ENCODE measurements at regions of chr20 and their contacts with region 1.

Region 1: DNA sequence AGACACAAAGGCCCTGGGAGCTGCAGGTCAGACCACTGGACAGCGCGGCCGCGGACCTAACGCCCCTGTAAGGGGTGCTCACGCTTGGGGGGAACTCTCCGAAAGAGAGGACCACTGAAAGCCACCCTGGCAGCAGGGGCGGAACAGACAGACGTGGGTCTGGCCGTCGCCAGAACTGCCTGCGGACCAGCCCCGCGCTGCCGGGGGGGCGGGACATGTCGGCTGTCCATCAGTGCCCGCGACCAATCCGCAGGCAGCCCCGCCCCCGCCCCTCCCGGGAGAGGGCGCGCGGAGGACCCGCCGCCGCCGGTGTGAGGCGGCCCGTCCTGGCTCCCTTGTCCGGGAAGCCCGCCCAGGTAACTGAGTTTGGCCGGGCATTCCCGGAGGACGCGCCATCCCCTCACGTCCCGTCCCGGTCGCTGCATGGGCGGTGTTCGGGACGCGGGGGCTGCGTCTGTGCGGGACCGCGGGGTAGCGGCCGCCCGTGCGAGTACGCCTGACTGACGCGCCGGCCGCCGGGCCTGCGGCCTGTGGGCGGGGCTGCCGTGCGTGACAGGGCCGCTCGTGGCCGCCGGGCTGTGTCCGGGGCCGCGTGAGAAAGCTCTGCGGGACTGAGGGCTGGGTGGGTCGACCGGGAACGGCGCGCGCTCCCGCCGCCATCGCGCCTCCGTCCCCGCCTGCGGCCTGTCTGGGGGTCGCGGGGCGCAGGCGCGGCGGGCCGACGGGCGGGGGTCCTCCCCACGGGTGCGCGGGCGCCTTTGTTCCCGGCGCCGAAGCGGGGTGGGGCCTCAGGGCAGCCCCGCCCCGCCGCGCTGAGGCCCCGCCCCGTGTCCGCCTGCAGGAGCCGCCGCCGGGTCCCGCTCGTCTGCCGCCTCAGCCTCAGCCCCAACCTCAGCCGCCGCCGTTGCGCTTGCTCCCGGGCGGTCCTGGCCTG is at the start of gene PLCG1:
- DNase-seq: peak; percentile 81
- H3K4me3 Mint-ChIP-seq: peak within 1 kb of the TSS; percentile 88
- H3K27ac Mint-ChIP-seq: peak within 1 kb of the TSS; percentile 82
- H3K4me1 Mint-ChIP-seq: peaks cover 60% of the 10 kb centered on the region
- H3K27me3 Mint-ChIP-seq: no peaks in the 10 kb centered on the region
- total RNA-seq, gene PLCG1: 174 and 187 TPM in 2 replicates

Region 2: DNA sequence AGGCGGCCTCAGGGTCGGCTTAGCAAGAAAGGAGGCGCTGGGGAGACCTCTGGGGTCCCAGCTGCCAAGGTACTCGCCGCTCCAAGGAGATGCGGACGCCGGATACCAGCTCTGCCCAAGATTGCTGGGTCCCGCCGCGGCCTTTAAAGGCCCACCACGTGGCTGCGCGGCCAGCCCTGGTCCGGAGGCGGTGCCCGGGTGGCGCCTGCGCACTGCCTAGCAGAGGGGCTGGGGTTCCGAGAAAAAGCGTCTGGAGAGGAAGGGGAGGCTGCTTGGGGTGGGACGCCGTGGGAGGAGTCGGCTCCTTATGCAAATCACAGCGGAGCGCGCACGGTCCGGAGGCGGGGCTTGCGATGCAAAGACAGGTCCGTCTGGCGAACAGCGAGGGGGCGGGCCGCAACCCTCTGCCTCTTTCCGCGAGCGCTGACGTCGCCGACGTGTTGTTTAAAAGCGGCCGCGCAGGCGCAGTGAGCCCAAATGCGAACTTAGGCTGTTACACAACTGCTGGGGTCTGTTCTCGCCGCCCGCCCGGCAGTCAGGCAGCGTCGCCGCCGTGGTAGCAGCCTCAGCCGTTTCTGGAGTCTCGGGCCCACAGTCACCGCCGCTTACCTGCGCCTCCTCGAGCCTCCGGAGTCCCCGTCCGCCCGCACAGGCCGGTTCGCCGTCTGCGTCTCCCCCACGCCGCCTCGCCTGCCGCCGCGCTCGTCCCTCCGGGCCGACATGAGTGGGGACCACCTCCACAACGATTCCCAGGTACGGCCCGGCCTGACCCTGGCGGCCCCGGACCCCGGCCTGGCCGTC is 108.4 kb before region 1 on chr20 and contains the start of gene TOP1:
- intact Hi-C with region 1: loop called (anchors 2 kb)
- DNase-seq: peak; percentile 100
- H3K4me3 Mint-ChIP-seq: peak within 1 kb of the TSS; percentile 82
- H3K27ac Mint-ChIP-seq: peak within 1 kb of the TSS; percentile 76
- H3K4me1 Mint-ChIP-seq: peaks cover 41% of the 10 kb centered on the region
- H3K27me3 Mint-ChIP-seq: no peaks in the 10 kb centered on the region
- total RNA-seq, gene TOP1: 116 and 118 TPM in 2 replicates

Region 3: DNA sequence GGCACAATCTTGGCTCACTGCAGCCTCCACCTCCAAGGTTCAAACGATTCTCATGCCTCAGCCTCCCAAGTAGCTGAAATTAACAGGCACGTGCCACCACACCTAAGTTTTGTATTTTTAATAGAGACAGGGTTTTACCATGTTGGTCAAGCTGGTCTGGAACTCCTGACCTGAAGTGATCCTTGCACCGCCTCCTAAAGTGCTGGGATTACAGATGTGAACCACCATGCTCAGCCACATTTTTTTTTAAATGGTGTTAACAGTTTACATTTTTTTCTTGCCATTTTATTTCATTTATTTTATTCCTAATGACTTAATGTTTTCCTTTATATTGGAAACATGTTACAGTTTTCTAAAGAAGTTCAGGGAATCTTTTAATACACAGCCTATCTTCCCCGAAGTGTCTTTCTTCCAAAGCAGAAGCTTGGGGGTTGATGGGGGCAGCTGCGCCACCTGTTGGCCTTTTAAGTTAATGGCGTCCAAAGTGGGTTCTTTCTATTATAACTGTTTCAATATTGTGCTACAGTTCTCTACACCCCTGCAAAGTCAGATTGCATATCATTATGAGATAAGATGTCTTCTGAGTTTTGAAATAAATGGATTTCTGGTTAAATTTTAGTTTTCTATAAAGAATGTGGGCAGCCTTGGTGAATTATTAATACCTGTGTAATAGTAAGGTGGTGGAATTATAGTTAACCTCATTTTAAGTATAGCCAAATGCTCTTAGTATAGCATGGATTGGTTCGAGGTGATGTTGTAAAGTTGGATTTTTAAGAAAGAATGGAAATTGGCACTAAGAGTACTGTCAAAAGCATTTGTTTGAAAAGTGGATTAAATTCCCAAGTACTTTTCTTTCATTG is 41.6 kb before region 1 on chr20:
- intact Hi-C with region 1: no loop called
- DNase-seq: peak; percentile 35
- H3K4me3 Mint-ChIP-seq: no peak overlapping the region
- H3K27ac Mint-ChIP-seq: no peak overlapping the region
- H3K4me1 Mint-ChIP-seq: peaks cover 9% of the 10 kb centered on the region
- H3K27me3 Mint-ChIP-seq: no peaks in the 10 kb centered on the region

Region 4: GRCh38 chr20:41161886-41162285 is 24.9 kb after region 1 on chr20:
- intact Hi-C with region 1: loop called (anchors 1 kb)
- DNase-seq: no peak
- H3K4me3 Mint-ChIP-seq: no peak overlapping the region
- H3K27ac Mint-ChIP-seq: peak overlapping the region; percentile 18
- H3K4me1 Mint-ChIP-seq: peaks cover 55% of the 10 kb centered on the region
- H3K27me3 Mint-ChIP-seq: no peaks in the 10 kb centered on the region

Region 5: DNA sequence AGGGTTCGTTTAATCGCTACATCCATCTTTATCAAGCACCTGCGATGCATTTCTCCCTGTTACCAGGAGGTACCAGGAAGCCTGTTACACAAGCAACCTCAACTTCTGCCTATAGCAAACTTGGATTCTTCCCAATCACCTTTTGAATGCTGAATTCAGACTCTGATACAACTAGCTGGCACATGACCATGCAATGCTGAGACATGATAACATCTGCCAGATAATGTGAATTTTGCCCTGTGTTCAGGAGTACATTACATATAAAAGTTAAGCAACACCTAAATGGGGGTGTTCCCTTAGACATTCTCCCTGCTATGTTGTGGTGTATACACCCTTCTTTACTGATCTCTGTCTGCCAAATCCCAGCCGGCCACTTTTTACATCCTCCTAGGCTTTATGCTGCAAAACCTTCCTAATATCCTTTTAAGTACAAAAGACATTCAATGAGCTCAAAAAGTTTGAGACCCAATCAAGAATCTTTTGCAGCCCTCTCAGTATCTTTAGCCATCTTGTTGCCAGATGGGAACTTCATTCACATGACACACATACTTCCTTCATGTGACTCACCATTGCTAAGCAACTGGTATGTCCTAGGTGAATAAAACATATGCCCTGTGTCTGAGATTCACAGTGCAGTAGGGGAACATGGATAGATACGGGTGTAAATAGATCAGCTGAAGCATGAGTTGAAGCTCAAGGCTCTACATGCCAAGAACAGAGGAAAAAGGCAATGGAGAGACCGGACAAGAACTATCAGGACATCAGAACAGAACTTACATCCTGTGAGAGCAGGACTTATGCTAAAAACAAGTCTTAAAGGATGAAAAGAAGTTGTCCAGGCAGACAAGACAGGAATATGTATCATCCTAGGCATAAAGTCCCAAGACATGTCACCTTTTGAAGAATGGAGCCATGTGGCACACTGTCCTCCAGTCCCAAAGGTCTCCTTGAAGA is 96.3 kb after region 1 on chr20:
- intact Hi-C with region 1: loop called (anchors 1 kb)
- DNase-seq: no peak
- H3K4me3 Mint-ChIP-seq: no peak overlapping the region
- H3K27ac Mint-ChIP-seq: no peak overlapping the region
- H3K4me1 Mint-ChIP-seq: peaks cover 35% of the 10 kb centered on the region
- H3K27me3 Mint-ChIP-seq: no peaks in the 10 kb centered on the region

Region 6: GRCh38 chr20:41339507-41340326 is 202.8 kb after region 1 on chr20:
- intact Hi-C with region 1: loop called (anchors 1 kb)
- DNase-seq: peak; percentile 77
- H3K4me3 Mint-ChIP-seq: peak overlapping the region; percentile 77
- H3K27ac Mint-ChIP-seq: no peak overlapping the region
- H3K4me1 Mint-ChIP-seq: peaks cover 10% of the 10 kb centered on the region
- H3K27me3 Mint-ChIP-seq: peaks cover 8% of the 10 kb centered on the region